ENCODE measurements at regions of chr2 and their contacts with region 1.

Region 1: GRCh38 chr2:6352906-6353515 is 512.7 kb downstream of the CMPK2 start:
- DNase-seq: no peak
- ATAC-seq: peak; percentile 22
- H3K4me3 ChIP-seq: no peak overlapping the region
- H3K27ac ChIP-seq: peak overlapping the region; percentile 86
- H3K4me1 ChIP-seq: peaks cover 33% of the 10 kb centered on the region
- H3K27me3 ChIP-seq: no peaks in the 10 kb centered on the region
- CTCF ChIP-seq: peak in 2 of 3 experiments; percentile 27 to 40; a peak in 2 of 6 replicates
- EP300 ChIP-seq: no peak
- POLR2A ChIP-seq: no peak
- RAD21 ChIP-seq: 0 out of 2 replicates have a peak, but pooled peaks have one; percentile 21

Region 2: GRCh38 chr2:6224267-6224666 is 128.7 kb before region 1 on chr2:
- CTCF ChIA-PET with region 1: no interaction called
- POLR2A ChIA-PET with region 1: no interaction called
- RAD21 ChIA-PET with region 1: interaction called, 3 read pairs
- SMC1A ChIA-PET with region 1: no interaction called
- in situ Hi-C with region 1: no loop called
- intact Hi-C with region 1: loop called (anchors 2 kb)
- DNase-seq: peak; percentile 26
- ATAC-seq: peak; percentile 85
- H3K4me3 ChIP-seq: no peak overlapping the region
- H3K27ac ChIP-seq: peak overlapping the region; percentile 25
- H3K4me1 ChIP-seq: peaks cover 10% of the 10 kb centered on the region
- H3K27me3 ChIP-seq: no peaks in the 10 kb centered on the region
- CTCF ChIP-seq: no peak
- EP300 ChIP-seq: no peak
- POLR2A ChIP-seq: no peak
- RAD21 ChIP-seq: no peak

Region 3: DNA sequence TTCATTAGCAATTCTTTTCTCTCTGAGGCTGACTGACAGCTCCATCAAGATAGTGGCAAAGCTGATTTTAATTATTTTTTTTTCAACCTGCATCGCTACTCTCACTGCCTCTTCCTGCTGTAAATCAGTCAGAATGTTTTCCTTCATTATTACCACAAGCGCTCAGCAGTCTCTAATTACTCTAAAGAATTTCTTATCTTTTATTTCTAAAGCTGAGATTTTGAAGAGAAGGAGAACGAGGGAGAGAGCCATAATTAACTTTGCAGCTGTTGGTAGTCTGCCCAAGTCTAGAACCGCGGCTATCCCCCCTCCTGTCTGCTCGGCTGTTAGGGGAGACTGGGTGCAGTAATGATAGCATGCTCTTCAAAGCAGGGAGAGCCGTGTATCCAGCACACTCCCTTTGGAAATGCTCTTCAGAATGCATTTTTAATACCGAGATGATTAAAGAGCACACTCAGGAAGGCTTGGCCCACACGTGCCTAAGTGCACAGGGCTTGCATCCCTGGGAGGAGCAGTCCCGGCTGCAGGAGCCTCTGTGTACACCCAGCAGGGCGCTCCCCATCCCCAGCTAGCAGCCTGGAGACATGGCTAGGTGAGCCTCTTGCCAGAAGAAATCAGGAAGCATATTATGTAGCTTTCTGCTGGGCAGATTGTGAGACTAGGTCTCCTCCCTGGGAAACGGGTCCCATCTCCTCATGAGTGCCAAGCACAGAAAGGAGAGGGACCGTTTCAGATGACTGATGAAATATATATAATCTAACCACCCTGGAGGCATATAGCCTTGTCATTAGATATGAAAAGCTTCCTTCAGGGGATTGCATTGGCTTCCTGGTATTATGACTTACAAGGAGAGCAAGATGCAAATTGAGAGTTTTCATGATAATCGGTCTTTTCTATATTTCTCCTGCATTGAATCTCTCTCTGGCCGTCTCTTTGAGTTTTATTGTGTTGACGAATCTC is 42.5 kb before region 1 on chr2:
- CTCF ChIA-PET with region 1: interaction called, 16 read pairs
- POLR2A ChIA-PET with region 1: interaction called, 7 read pairs
- RAD21 ChIA-PET with region 1: interaction called, 39 read pairs
- SMC1A ChIA-PET with region 1: interaction called, 40 read pairs
- in situ Hi-C with region 1: no loop called
- intact Hi-C with region 1: loop called (anchors 1 kb)
- DNase-seq: no peak
- ATAC-seq: peak; percentile 60
- H3K4me3 ChIP-seq: no peak overlapping the region
- H3K27ac ChIP-seq: peak overlapping the region; percentile 79
- H3K4me1 ChIP-seq: peaks cover 18% of the 10 kb centered on the region
- H3K27me3 ChIP-seq: no peaks in the 10 kb centered on the region
- CTCF ChIP-seq: no peak
- EP300 ChIP-seq: no peak
- POLR2A ChIP-seq: no peak
- RAD21 ChIP-seq: no peak

Region 4: GRCh38 chr2:6337472-6337820 is 15.6 kb before region 1 on chr2:
- CTCF ChIA-PET with region 1: interaction called, 6 read pairs
- POLR2A ChIA-PET with region 1: interaction called, 5 read pairs
- RAD21 ChIA-PET with region 1: interaction called, 45 read pairs
- SMC1A ChIA-PET with region 1: interaction called, 53 read pairs
- in situ Hi-C with region 1: no loop called
- intact Hi-C with region 1: no loop called
- DNase-seq: no peak
- ATAC-seq: no peak
- H3K4me3 ChIP-seq: no peak overlapping the region
- H3K27ac ChIP-seq: no peak overlapping the region
- H3K4me1 ChIP-seq: peaks cover 3% of the 10 kb centered on the region
- H3K27me3 ChIP-seq: no peaks in the 10 kb centered on the region
- CTCF ChIP-seq: no peak
- EP300 ChIP-seq: no peak
- POLR2A ChIP-seq: no peak
- RAD21 ChIP-seq: no peak

Region 5: DNA sequence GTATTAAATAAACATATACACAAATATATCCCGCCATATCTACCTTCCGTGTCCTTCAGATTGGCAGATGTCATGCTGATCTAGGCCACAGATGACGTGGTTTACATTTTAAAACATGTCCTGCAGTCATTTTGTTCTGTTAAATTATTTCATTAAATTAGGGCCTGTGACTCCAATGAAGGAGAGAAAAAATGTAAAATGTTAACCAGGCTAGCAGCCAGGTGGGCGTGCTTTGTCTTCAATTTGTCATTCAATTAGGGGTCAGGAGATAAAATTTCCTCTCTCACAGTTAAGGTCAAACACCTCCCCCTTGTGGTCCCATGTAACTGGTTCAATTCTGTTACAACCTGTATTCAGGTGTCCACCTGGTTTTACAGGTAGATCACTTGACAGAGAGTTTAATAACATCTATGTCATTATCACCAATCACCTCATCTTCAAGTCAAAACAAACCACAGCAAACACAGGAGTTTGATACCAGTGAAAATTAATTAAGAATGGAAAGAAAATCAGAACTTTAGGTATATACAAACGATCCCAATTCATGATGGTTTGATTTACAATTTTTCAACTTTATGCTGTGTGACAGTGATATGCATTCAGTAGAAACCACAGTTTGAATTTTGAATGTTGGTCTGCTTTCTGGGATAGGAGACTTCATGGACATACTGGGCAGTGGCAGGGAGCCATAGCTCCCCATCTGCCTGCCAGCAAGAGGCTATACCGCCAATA is 173.2 kb after region 1 on chr2:
- CTCF ChIA-PET with region 1: no interaction called
- POLR2A ChIA-PET with region 1: no interaction called
- RAD21 ChIA-PET with region 1: no interaction called
- SMC1A ChIA-PET with region 1: no interaction called
- in situ Hi-C with region 1: no loop called
- intact Hi-C with region 1: loop called (anchors 1 kb)
- DNase-seq: peak; percentile 9
- ATAC-seq: peak; percentile 52; the same call in 2 of the 3 replicates
- H3K4me3 ChIP-seq: no peak overlapping the region
- H3K27ac ChIP-seq: no peak overlapping the region
- H3K4me1 ChIP-seq: no peaks in the 10 kb centered on the region
- H3K27me3 ChIP-seq: no peaks in the 10 kb centered on the region
- CTCF ChIP-seq: peak; percentile 54 to 61 (median 54); a peak in 5 of 6 replicates
- EP300 ChIP-seq: no peak
- POLR2A ChIP-seq: no peak
- RAD21 ChIP-seq: peak; percentile 79

Region 6: GRCh38 chr2:6773007-6773693 is 420.1 kb after region 1 on chr2:
- CTCF ChIA-PET with region 1: interaction called, 5 read pairs
- POLR2A ChIA-PET with region 1: no interaction called
- RAD21 ChIA-PET with region 1: no interaction called
- SMC1A ChIA-PET with region 1: no interaction called
- in situ Hi-C with region 1: no loop called
- intact Hi-C with region 1: loop called (anchors 2 kb)
- DNase-seq: no peak
- ATAC-seq: peak; percentile 98
- H3K4me3 ChIP-seq: no peak overlapping the region
- H3K27ac ChIP-seq: no peak overlapping the region
- H3K4me1 ChIP-seq: no peaks in the 10 kb centered on the region
- H3K27me3 ChIP-seq: peaks cover 0 to 2% of the 10 kb centered on the region in 2 experiments; a peak in 1 of 4 replicates
- CTCF ChIP-seq: peak; percentile 89 to 95 (median 90)
- EP300 ChIP-seq: no peak
- POLR2A ChIP-seq: no peak
- RAD21 ChIP-seq: peak; percentile 94

Region 7: GRCh38 chr2:7057865-7058400 is 704.9 kb after region 1 on chr2:
- CTCF ChIA-PET with region 1: no interaction called
- POLR2A ChIA-PET with region 1: no interaction called
- RAD21 ChIA-PET with region 1: no interaction called
- SMC1A ChIA-PET with region 1: no interaction called
- in situ Hi-C with region 1: no loop called
- intact Hi-C with region 1: loop called (anchors 10 kb)
- DNase-seq: peak; percentile 48
- ATAC-seq: peak; percentile 82
- H3K4me3 ChIP-seq: no peak overlapping the region
- H3K27ac ChIP-seq: peak overlapping the region; percentile 18; the same call in 1 of the 2 replicates
- H3K4me1 ChIP-seq: peaks cover 13% of the 10 kb centered on the region
- H3K27me3 ChIP-seq: no peaks in the 10 kb centered on the region
- CTCF ChIP-seq: no peak
- EP300 ChIP-seq: peak in 1 of 2 experiments; percentile 49; a peak in 1 of 4 replicates
- POLR2A ChIP-seq: no peak
- RAD21 ChIP-seq: no peak

Measured in GM12878 (cell line).